Activated B cell treated with CpG ODN at 0.5 μM for 24 hours (primary cell): ENCODE measurements at regions of chr18 and their contacts with region 1.

Region 1: GRCh38 chr18:64380117-64380516 is 231.2 kb upstream of the LINC00305 start:
- DNase-seq: no peak
- ATAC-seq: peak; percentile 86
- H3K4me3 Mint-ChIP-seq: peak overlapping the region; percentile 41
- H3K27ac Mint-ChIP-seq: peak overlapping the region; percentile 79
- H3K4me1 Mint-ChIP-seq: peaks cover 32% of the 10 kb centered on the region
- H3K27me3 Mint-ChIP-seq: no peaks in the 10 kb centered on the region
- CTCF ChIP-seq: no peak

Region 2: GRCh38 chr18:62863579-62864001 is 1516.5 kb before region 1 on chr18:
- CTCF ChIA-PET with region 1: no interaction called
- POLR2A ChIA-PET with region 1: no interaction called
- intact Hi-C with region 1: loop called (anchors 10 kb)
- DNase-seq: no peak
- ATAC-seq: no peak
- H3K4me3 Mint-ChIP-seq: no peak overlapping the region
- H3K27ac Mint-ChIP-seq: no peak overlapping the region
- H3K4me1 Mint-ChIP-seq: no peaks in the 10 kb centered on the region
- H3K27me3 Mint-ChIP-seq: no peaks in the 10 kb centered on the region
- CTCF ChIP-seq: no peak

Region 3: DNA sequence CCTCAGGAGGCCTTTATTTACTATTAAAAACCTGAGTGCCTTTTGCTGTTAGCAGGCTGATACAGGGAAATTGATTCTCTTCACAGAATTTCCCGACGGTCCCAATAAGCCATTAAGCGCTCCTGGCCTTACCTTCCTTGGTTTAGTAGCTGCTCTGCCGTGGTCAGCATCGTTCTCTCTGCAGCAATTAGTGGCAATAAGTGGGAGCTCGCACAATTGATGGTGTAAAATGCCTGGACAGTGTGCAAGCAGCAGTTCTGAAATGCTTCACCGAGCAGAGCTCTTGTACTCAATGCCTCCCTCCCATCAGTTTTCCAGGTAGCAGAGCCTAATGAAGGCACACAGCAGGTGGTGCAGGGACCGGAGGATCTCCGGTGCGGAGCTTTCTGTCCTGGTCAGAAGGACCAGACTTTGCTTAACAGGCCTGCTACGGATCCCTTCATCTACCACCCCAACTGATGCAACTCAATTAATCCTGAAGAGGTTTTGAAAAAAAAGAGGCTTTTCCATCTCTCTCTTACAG is 230.1 kb before region 1 on chr18:
- CTCF ChIA-PET with region 1: no interaction called
- POLR2A ChIA-PET with region 1: no interaction called
- intact Hi-C with region 1: no loop called
- DNase-seq: no peak
- ATAC-seq: no peak
- H3K4me3 Mint-ChIP-seq: no peak overlapping the region
- H3K27ac Mint-ChIP-seq: no peak overlapping the region
- H3K4me1 Mint-ChIP-seq: no peaks in the 10 kb centered on the region
- H3K27me3 Mint-ChIP-seq: no peaks in the 10 kb centered on the region
- CTCF ChIP-seq: no peak

Region 4: GRCh38 chr18:64365106-64365505 is 15.0 kb before region 1 on chr18:
- CTCF ChIA-PET with region 1: no interaction called
- POLR2A ChIA-PET with region 1: no interaction called
- intact Hi-C with region 1: no loop called
- DNase-seq: no peak
- ATAC-seq: no peak
- H3K4me3 Mint-ChIP-seq: no peak overlapping the region
- H3K27ac Mint-ChIP-seq: no peak overlapping the region
- H3K4me1 Mint-ChIP-seq: no peaks in the 10 kb centered on the region
- H3K27me3 Mint-ChIP-seq: no peaks in the 10 kb centered on the region
- CTCF ChIP-seq: no peak

Region 5: GRCh38 chr18:64403784-64404503 is 23.8 kb after region 1 on chr18:
- CTCF ChIA-PET with region 1: no interaction called
- POLR2A ChIA-PET with region 1: no interaction called
- intact Hi-C with region 1: loop called (anchors 1 kb)
- DNase-seq: no peak
- ATAC-seq: peak; percentile 40
- H3K4me3 Mint-ChIP-seq: no peak overlapping the region
- H3K27ac Mint-ChIP-seq: no peak overlapping the region
- H3K4me1 Mint-ChIP-seq: peaks cover 11% of the 10 kb centered on the region
- H3K27me3 Mint-ChIP-seq: no peaks in the 10 kb centered on the region
- CTCF ChIP-seq: no peak